ENCODE measurements at regions of chr18 and their contacts with region 1.

Region 1: DNA sequence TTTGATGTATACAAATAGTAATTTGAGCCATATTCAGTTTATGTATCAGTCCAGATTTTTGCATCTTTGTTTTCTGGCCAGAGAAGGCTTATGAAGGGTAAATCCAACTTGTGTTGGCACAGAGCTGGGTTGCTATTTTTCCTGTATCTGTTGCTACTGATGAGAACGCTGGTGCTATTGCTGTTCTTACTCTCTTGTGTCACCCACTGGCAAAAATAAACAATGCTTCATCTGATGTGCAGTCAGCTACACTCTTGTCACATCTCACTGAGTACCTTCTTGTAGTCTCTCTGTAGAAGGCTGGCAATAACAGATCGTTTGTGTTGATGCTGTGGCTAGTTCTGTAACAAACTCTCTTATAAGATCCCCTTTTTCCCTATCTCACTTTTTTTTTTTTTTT is 323.4 kb downstream of the CDH19 start:
- DNase-seq: no peak
- H3K4me3 ChIP-seq: no peak overlapping the region
- H3K27ac ChIP-seq: no peak overlapping the region
- H3K4me1 ChIP-seq: no peaks in the 10 kb centered on the region
- H3K27me3 ChIP-seq: no peaks in the 10 kb centered on the region
- CTCF ChIP-seq: no peak
- POLR2A ChIP-seq: no peak

Region 2: GRCh38 chr18:66344227-66344626 is 63.8 kb after region 1 on chr18:
- intact Hi-C with region 1: loop called (anchors 10 kb)
- DNase-seq: no peak
- H3K4me3 ChIP-seq: no peak overlapping the region
- H3K27ac ChIP-seq: no peak overlapping the region
- H3K4me1 ChIP-seq: no peaks in the 10 kb centered on the region
- H3K27me3 ChIP-seq: no peaks in the 10 kb centered on the region
- CTCF ChIP-seq: no peak
- POLR2A ChIP-seq: no peak